Gastrocnemius medialis (tissue), 4 donors: ENCODE measurements at regions of chr2 and their contacts with region 1.

Region 1: DNA sequence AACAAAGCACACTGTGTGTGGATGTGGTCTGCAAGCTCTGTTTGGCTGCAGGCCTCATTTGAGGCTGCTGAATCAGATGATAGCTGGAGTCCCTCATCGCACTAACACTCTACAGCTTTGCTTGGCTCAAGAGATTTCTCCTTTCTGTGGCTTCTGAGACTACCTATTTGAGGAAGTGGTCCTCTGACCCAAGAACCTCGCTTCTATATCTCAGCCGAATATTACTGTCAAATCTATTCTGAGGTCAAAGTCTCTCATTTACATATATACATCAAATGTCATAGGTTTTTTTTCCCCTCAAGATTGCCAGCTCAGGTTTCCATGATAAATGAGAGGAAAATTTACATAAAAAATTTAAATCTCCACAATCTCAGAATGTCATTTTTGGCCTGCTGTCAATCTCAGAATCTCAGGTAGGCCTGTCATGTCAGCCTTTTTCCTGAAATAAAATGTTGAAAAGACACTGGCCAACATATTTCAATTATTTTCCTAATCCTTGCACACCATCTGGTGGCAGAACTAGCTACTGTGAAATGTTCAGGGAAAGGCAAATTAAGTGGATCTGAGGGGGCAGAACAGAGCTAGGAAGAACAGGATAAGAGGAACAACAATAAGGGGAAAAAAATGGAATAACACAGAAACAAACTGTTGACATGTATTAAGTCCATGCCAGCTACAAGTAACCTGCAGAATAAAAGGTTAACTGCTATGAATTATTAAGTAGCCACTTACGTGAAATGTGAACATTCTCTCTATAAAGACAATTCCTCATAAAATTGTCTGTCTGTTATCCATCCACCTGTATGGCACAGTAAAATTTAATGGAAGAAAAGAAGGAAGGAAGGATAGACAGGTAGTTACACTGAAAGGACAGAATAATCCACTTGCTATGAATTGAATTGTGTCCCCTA is 39.3 kb downstream of the AP1S3 start:
- DNase-seq: no peak
- ATAC-seq: no peak
- H3K4me3 ChIP-seq: no peak overlapping the region
- H3K27ac ChIP-seq: no peak overlapping the region
- H3K4me1 ChIP-seq: no peaks in the 10 kb centered on the region
- H3K27me3 ChIP-seq: no peaks in the 10 kb centered on the region
- CTCF ChIP-seq: peak; percentile 29 to 51 (median 43)
- POLR2A ChIP-seq: no peak

Region 2: GRCh38 chr2:222959336-222959735 is 838.7 kb before region 1 on chr2:
- in situ Hi-C with region 1: loop called in 1 of 4 experiments (anchors 25 kb)
- intact Hi-C with region 1: no loop called
- DNase-seq: no peak
- ATAC-seq: no peak
- H3K4me3 ChIP-seq: no peak overlapping the region
- H3K27ac ChIP-seq: no peak overlapping the region
- H3K4me1 ChIP-seq: no peaks in the 10 kb centered on the region
- H3K27me3 ChIP-seq: no peaks in the 10 kb centered on the region
- CTCF ChIP-seq: no peak
- POLR2A ChIP-seq: no peak

Region 3: GRCh38 chr2:222976521-222977076 is 821.5 kb before region 1 on chr2:
- in situ Hi-C with region 1: loop called in 3 of 4 experiments (anchors 5 to 25 kb)
- intact Hi-C with region 1: no loop called
- DNase-seq: no peak
- ATAC-seq: no peak
- H3K4me3 ChIP-seq: no peak overlapping the region
- H3K27ac ChIP-seq: no peak overlapping the region
- H3K4me1 ChIP-seq: peaks cover 0 to 8% of the 10 kb centered on the region in 2 donors
- H3K27me3 ChIP-seq: no peaks in the 10 kb centered on the region
- CTCF ChIP-seq: no peak
- POLR2A ChIP-seq: no peak